RWPE1 (cell line): ENCODE measurements at regions of chr1 and their contacts with region 1.

Region 1: GRCh38 chr1:45490626-45491486 is at the start of gene TESK2:
- DNase-seq: peak; percentile 99
- H3K27ac ChIP-seq: peak within 1 kb of the TSS; percentile 82
- CTCF ChIP-seq: no peak

Region 2: GRCh38 chr1:45339789-45340570 is 150.9 kb before region 1 on chr1 and contains the starts of genes MUTYH and TOE1:
- CTCF ChIA-PET with region 1: interaction called, 17 read pairs
- POLR2A ChIA-PET with region 1: interaction called, 3 read pairs
- DNase-seq: peak; percentile 92
- H3K27ac ChIP-seq: peak within 1 kb of the TSS; percentile 96
- CTCF ChIP-seq: no peak

Region 3: GRCh38 chr1:45348716-45349677 is 141.9 kb before region 1 on chr1:
- CTCF ChIA-PET with region 1: interaction called, 12 read pairs
- POLR2A ChIA-PET with region 1: no interaction called
- DNase-seq: no peak
- H3K27ac ChIP-seq: peak overlapping the region; percentile 88
- CTCF ChIP-seq: no peak

Region 4: DNA sequence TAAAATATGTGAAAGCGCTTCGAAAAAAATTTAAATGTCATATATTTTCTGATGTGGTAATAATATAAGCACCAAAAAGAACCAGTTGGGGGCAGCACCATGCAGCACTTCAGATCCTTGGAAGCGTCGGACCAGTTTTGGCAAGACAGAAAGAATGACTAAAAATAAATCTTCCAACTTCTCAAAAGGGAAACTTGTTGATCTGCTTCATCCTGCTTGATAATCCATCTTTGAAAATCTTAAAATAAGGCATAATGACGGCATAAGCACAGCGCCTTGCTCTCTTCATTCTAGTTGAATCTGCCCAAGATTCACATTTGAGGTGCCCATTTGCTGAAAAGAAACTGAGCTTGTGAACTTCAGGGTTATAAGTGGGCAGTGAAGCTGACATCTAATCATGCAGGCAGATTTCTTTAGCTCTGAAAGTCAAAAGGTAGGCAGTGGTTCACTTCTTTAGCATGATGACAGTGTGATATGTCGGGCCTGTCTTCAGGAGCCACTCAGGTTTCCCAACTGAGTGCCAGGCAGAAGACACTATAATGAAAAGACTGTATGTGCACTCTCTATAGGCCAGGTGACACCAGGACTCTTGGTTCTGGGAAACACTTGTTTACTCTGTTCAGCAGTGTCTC is 130.9 kb before region 1 on chr1:
- CTCF ChIA-PET with region 1: interaction called, 60 read pairs
- POLR2A ChIA-PET with region 1: interaction called, 9 read pairs
- DNase-seq: peak; percentile 44
- H3K27ac ChIP-seq: no peak overlapping the region
- CTCF ChIP-seq: no peak; the same call in none of the 2 replicates

Region 5: DNA sequence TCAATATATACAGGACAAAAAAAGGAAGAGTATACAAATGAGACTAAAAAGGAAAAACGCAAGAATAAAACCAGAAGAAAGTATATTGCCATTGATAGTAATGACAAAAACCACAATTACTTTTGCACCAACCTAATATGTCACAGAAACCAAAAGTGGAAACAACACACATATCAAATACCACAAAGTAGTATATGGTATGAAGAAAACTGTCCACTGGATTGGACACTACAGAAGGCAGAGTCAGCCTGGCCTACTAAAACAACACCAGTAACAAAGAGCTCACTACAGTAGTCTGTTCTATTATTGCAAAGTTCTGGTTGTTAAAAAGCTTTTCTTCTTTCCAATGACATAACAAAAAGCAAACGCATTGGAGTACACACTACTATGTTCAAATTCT is 17.6 kb before region 1 on chr1:
- CTCF ChIA-PET with region 1: no interaction called
- POLR2A ChIA-PET with region 1: no interaction called
- DNase-seq: no peak
- H3K27ac ChIP-seq: no peak overlapping the region
- CTCF ChIP-seq: no peak